ENCODE measurements at regions of chr5 and their contacts with region 1.

Region 1: GRCh38 chr5:56050551-56051255 is 55.9 kb upstream of the IL6ST start:
- DNase-seq: no peak
- H3K4me3 ChIP-seq: no peak overlapping the region
- CTCF ChIP-seq: no peak

Region 2: GRCh38 chr5:56012281-56012963 is 38.3 kb before region 1 on chr5:
- in situ Hi-C with region 1: loop called (anchors 5 kb)
- DNase-seq: no peak
- H3K4me3 ChIP-seq: no peak overlapping the region
- CTCF ChIP-seq: no peak